ENCODE measurements at regions of chr6 and their contacts with region 1.

Region 1: GRCh38 chr6:100880853-100881706 is at the start of gene ASCC3:
- DNase-seq: peak; percentile 87
- ATAC-seq: peak; percentile 96
- H3K4me3 Mint-ChIP-seq: peak within 1 kb of the TSS; percentile 100
- H3K27ac Mint-ChIP-seq: peak within 1 kb of the TSS; percentile 97
- H3K4me1 Mint-ChIP-seq: peaks cover 34% of the 10 kb centered on the region
- H3K27me3 Mint-ChIP-seq: no peaks in the 10 kb centered on the region
- CTCF ChIP-seq: no peak
- total RNA-seq, gene ASCC3: 44.1 and 47.8 TPM in 2 replicates

Region 2: DNA sequence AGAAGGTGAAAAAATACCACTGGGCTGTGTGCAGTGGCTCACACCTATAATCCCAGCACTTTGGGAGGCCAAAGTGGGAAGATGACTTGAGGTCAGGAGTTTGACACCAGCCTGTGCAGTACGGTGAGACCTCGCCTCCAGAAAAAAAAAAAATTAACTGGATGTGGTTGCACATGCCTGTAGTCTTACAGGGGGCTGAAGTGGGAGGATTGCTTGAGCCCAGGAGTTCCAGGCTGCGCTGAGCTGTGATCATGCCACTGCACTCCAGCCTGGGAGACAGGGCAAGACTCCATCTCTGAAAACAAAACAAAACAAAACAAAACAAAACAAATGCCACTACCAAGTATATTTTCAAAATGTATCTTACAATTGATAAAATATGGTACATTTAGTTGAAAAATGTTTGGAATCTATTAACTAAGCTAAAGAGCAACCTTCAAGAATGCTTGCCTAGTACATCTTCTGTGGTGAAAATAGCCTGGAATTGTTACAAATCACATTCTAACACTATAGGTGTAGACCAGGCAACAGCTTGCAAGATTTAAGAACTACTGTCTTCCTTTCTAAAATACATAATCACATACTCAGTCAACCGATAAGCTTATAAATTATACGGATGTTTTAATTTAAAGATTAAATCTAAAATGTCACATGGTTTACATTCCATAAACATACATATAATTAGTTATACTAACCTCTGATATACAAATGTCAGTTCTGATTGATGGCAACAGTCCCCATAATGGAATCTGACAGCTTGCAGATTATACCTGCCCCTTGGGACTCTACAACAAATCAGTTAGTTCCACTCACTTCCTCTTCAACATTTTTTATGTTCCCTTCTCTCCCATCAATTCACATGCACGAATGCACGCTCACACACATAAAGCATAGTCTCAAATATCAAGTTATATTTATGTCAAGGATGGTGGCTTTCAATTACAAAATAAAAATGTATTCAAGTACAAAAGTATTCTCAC is 150.8 kb before region 1 on chr6:
- CTCF ChIA-PET with region 1: no interaction called
- POLR2A ChIA-PET with region 1: interaction called, 3 read pairs
- intact Hi-C with region 1: loop called (anchors 5 kb)
- DNase-seq: no peak
- ATAC-seq: no peak
- H3K4me3 Mint-ChIP-seq: no peak overlapping the region
- H3K27ac Mint-ChIP-seq: no peak overlapping the region
- H3K4me1 Mint-ChIP-seq: peaks cover 13% of the 10 kb centered on the region
- H3K27me3 Mint-ChIP-seq: no peaks in the 10 kb centered on the region
- CTCF ChIP-seq: no peak

Region 3: GRCh38 chr6:100796049-100796823 is 84.8 kb before region 1 on chr6:
- CTCF ChIA-PET with region 1: no interaction called
- POLR2A ChIA-PET with region 1: no interaction called
- intact Hi-C with region 1: loop called (anchors 5 kb)
- DNase-seq: no peak
- ATAC-seq: peak; percentile 94
- H3K4me3 Mint-ChIP-seq: no peak overlapping the region
- H3K27ac Mint-ChIP-seq: peak overlapping the region; percentile 56
- H3K4me1 Mint-ChIP-seq: peaks cover 12% of the 10 kb centered on the region
- H3K27me3 Mint-ChIP-seq: no peaks in the 10 kb centered on the region
- CTCF ChIP-seq: no peak

Region 4: DNA sequence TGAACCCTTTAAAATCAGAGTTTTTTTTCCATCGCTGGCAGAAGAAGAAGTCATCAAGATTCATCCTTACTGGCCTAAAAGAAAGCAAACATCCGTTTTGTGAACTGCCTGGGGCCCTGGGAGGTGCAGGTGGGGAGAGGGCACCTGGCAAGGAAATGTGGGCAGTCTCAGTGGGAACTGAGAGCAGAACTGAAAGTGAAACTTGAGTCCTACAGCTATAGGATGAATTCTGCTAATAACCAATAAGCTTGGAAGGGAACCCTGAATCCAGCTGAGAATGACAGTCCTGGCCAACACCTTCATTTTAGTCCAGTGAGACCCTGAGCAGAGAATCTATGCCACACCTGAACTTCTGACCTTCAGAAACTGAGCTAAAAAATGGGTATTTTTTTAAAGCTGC is 130.1 kb after region 1 on chr6:
- CTCF ChIA-PET with region 1: no interaction called
- POLR2A ChIA-PET with region 1: no interaction called
- intact Hi-C with region 1: loop called (anchors 5 kb)
- DNase-seq: no peak
- ATAC-seq: peak; percentile 75
- H3K4me3 Mint-ChIP-seq: peak overlapping the region; percentile 24
- H3K27ac Mint-ChIP-seq: no peak overlapping the region
- H3K4me1 Mint-ChIP-seq: peaks cover 29% of the 10 kb centered on the region
- H3K27me3 Mint-ChIP-seq: no peaks in the 10 kb centered on the region
- CTCF ChIP-seq: no peak

Region 5: DNA sequence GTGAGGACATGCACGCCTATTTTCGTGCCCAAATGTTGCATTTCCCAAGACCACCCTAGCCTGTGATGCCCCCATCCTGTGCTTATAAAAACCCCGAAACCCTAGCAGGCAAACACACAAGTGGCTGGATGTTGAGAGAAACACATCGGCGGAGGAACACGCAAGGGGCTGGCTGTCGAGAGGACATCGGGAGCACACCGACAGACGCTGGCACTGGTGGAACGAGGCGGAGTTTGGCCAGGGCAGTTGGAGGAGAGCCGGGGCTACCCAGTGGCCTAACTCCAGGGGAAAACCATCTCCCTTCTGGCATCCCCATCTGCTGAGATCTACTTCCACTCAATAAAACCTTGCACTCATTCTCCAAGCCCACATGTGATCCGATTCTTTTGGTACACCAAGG is 286.6 kb after region 1 on chr6:
- CTCF ChIA-PET with region 1: no interaction called
- POLR2A ChIA-PET with region 1: no interaction called
- intact Hi-C with region 1: no loop called
- DNase-seq: no peak
- ATAC-seq: no peak
- H3K4me3 Mint-ChIP-seq: no peak overlapping the region
- H3K27ac Mint-ChIP-seq: no peak overlapping the region
- H3K4me1 Mint-ChIP-seq: no peaks in the 10 kb centered on the region
- H3K27me3 Mint-ChIP-seq: no peaks in the 10 kb centered on the region
- CTCF ChIP-seq: no peak

Measured in activated B cell treated with CpG ODN at 0.5 μM for 24 hours (primary cell).